B cell (primary cell): ENCODE measurements at regions of chr17 and their contacts with region 1.

Region 1: GRCh38 chr17:29777663-29778062 is 152.4 kb downstream of the SSH2 start:
- DNase-seq: no peak
- ATAC-seq: no peak
- H3K4me3 ChIP-seq: no peak overlapping the region
- H3K4me3 Mint-ChIP-seq: no peak overlapping the region
- H3K27ac ChIP-seq: no peak overlapping the region
- H3K27ac Mint-ChIP-seq: no peak overlapping the region
- H3K4me1 ChIP-seq: peaks cover 9 to 10% of the 10 kb centered on the region in 2 donors
- H3K4me1 Mint-ChIP-seq: peaks cover 12% of the 10 kb centered on the region
- H3K27me3 ChIP-seq: no peaks in the 10 kb centered on the region
- H3K27me3 Mint-ChIP-seq: no peaks in the 10 kb centered on the region
- CTCF ChIP-seq: no peak

Region 2: DNA sequence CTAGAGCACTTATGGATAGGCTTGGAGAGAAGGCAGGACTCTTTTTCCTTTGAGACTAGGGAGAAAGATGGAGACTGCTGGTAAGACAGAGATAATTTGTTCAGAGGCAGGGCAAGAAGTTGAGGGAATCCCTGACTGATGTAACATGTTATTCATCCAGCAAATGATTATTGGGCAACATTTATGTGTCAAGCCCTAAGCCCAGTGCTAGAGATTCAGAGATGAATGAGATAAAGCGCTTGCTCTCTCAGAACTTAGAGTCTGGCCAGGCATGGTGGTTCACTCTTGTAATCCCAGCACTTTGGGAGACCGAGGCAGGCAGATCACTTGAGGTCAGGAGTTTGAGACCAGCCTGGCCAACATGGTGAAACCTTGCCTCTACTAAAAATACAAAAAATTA is 435.9 kb before region 1 on chr17:
- CTCF ChIA-PET with region 1: no interaction called
- POLR2A ChIA-PET with region 1: no interaction called
- intact Hi-C with region 1: no loop called
- DNase-seq: no peak
- ATAC-seq: no peak
- H3K4me3 ChIP-seq: no peak overlapping the region
- H3K4me3 Mint-ChIP-seq: no peak overlapping the region
- H3K27ac ChIP-seq: no peak overlapping the region
- H3K27ac Mint-ChIP-seq: no peak overlapping the region
- H3K4me1 ChIP-seq: peaks cover 8 to 13% of the 10 kb centered on the region in 2 donors
- H3K4me1 Mint-ChIP-seq: peaks cover 12% of the 10 kb centered on the region
- H3K27me3 ChIP-seq: no peaks in the 10 kb centered on the region
- H3K27me3 Mint-ChIP-seq: peaks cover 6% of the 10 kb centered on the region
- CTCF ChIP-seq: no peak

Region 3: DNA sequence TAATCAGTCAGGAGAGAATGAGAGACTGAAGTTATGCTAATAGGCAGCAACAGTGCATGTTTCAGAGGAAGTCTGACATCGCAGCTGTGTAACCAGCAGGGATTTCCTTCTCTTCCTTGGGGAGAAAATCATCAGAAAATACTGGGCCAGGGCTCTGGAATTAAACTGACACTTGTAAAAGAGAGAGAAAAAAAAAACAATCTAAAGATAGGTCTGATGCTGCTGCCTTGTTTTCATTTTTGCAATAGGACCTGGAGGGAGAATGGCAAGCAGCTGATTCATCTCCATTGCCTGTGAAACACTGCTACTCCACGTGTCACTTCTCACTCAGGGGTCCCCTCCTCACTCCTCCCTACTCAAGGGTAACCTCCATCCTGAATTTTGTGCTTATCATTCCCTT is 137.2 kb before region 1 on chr17:
- CTCF ChIA-PET with region 1: interaction called, 196 read pairs
- POLR2A ChIA-PET with region 1: no interaction called
- intact Hi-C with region 1: loop called (anchors 1 kb)
- DNase-seq: no peak
- ATAC-seq: no peak
- H3K4me3 ChIP-seq: no peak overlapping the region
- H3K4me3 Mint-ChIP-seq: no peak overlapping the region
- H3K27ac ChIP-seq: peak overlapping the region in 1 of 2 donors; percentile 64
- H3K27ac Mint-ChIP-seq: peak overlapping the region; percentile 65
- H3K4me1 ChIP-seq: peaks cover 15 to 19% of the 10 kb centered on the region in 2 donors
- H3K4me1 Mint-ChIP-seq: peaks cover 32% of the 10 kb centered on the region
- H3K27me3 ChIP-seq: no peaks in the 10 kb centered on the region
- H3K27me3 Mint-ChIP-seq: no peaks in the 10 kb centered on the region
- CTCF ChIP-seq: no peak

Region 4: GRCh38 chr17:29682054-29682453 is 95.6 kb before region 1 on chr17:
- CTCF ChIA-PET with region 1: interaction called, 72 read pairs
- POLR2A ChIA-PET with region 1: interaction called, 8 read pairs
- intact Hi-C with region 1: loop called (anchors 1 kb)
- DNase-seq: peak; percentile 76
- ATAC-seq: peak; percentile 86
- H3K4me3 ChIP-seq: no peak overlapping the region
- H3K4me3 Mint-ChIP-seq: peak overlapping the region; percentile 11
- H3K27ac ChIP-seq: peak overlapping the region in 1 of 2 donors; percentile 58
- H3K27ac Mint-ChIP-seq: peak overlapping the region; percentile 38
- H3K4me1 ChIP-seq: peaks cover 15 to 16% of the 10 kb centered on the region in 2 donors
- H3K4me1 Mint-ChIP-seq: peaks cover 28% of the 10 kb centered on the region
- H3K27me3 ChIP-seq: no peaks in the 10 kb centered on the region
- H3K27me3 Mint-ChIP-seq: no peaks in the 10 kb centered on the region
- CTCF ChIP-seq: peak; percentile 63

Region 5: DNA sequence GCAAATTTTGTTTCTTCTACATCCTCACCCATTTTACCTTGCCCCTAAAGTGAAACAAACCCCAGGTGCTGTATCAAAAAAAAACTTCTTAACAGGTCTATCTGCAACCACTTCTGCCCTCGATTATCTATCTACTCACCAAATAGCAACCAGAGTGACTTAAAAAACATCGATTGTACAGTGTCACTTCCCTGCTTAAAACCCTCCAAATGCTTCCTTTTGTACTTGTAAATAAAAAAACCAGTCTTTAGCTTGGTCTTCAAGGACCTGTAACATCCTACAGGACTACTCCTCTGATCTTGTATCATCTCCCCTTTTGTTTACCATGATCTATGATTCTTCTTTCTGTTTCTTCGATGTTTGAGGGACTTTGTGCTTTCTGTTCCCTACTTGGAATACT is 72.3 kb before region 1 on chr17:
- CTCF ChIA-PET with region 1: interaction called, 18 read pairs
- POLR2A ChIA-PET with region 1: interaction called, 6 read pairs
- intact Hi-C with region 1: loop called (anchors 1 kb)
- DNase-seq: peak; percentile 48
- ATAC-seq: no peak
- H3K4me3 ChIP-seq: peak overlapping the region in 3 of 5 experiments; percentile 11 to 15 (median 11)
- H3K4me3 Mint-ChIP-seq: peak overlapping the region; percentile 59
- H3K27ac ChIP-seq: peak overlapping the region; percentile 94 to 97
- H3K27ac Mint-ChIP-seq: peak overlapping the region; percentile 90
- H3K4me1 ChIP-seq: peaks cover 49 to 62% of the 10 kb centered on the region in 2 donors
- H3K4me1 Mint-ChIP-seq: peaks cover 56% of the 10 kb centered on the region
- H3K27me3 ChIP-seq: no peaks in the 10 kb centered on the region
- H3K27me3 Mint-ChIP-seq: no peaks in the 10 kb centered on the region
- CTCF ChIP-seq: no peak

Region 6: GRCh38 chr17:29753845-29754439 is 23.7 kb before region 1 on chr17:
- CTCF ChIA-PET with region 1: interaction called, 103 read pairs
- POLR2A ChIA-PET with region 1: interaction called, 12 read pairs
- intact Hi-C with region 1: no loop called
- DNase-seq: peak; percentile 69
- ATAC-seq: peak; percentile 72
- H3K4me3 ChIP-seq: no peak overlapping the region
- H3K4me3 Mint-ChIP-seq: peak overlapping the region; percentile 61
- H3K27ac ChIP-seq: peak overlapping the region; percentile 55 to 77
- H3K27ac Mint-ChIP-seq: peak overlapping the region; percentile 82
- H3K4me1 ChIP-seq: peaks cover 43 to 48% of the 10 kb centered on the region in 2 donors
- H3K4me1 Mint-ChIP-seq: peaks cover 53% of the 10 kb centered on the region
- H3K27me3 ChIP-seq: no peaks in the 10 kb centered on the region
- H3K27me3 Mint-ChIP-seq: no peaks in the 10 kb centered on the region
- CTCF ChIP-seq: no peak